Right lobe of liver (tissue), 6 donors: ENCODE measurements at regions of chr2 and their contacts with region 1.

Region 1: GRCh38 chr2:40554668-40555285 is 102.9 kb upstream of the SLC8A1 start:
- DNase-seq: peak in 2 of 3 donors; percentile 43 to 65
- ATAC-seq: peak; percentile 87 to 92 (median 90)
- H3K4me3 ChIP-seq: no peak overlapping the region
- H3K27ac ChIP-seq: no peak overlapping the region
- H3K4me1 ChIP-seq: no peaks in the 10 kb centered on the region
- H3K27me3 ChIP-seq: no peaks in the 10 kb centered on the region
- CTCF ChIP-seq: peak; percentile 71 to 88 (median 82)
- POLR2A ChIP-seq: no peak

Region 2: DNA sequence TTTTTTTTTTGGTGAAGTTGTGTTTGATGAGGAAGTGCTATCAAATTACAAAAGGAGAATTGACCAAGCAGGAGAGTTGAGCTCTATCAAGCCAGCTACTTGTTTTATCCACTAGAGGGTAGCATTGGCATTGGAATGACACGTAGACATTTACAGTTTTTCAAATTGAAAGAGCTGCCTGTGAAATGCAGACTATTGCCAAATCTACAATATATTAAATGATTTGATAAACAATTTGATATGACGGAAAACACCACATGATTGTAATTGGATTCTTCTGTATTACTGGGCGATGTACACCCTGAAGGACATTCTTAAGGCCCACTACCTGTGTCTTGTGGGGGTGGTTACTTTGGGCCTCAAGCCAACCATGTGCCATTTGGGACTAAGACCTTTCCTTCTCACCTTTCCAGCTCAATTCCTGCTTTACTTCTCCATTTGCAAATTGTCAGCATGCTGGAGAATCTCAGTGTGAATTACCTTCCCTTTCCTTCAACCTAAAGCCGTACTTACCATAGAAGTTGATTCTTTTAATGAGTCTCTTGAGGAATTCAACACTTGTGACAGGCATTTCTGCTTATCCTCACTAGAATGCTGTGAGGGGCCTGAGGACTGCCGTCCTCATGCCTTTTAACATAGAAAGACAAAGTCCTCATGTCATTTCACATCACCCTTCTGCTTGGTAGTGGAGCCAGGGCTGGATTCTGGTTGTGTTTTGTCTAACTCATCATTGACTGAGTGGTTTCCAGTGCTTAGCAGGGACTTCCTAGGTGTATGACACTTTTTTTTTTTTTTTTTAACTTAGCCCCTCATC is 640.9 kb before region 1 on chr2:
- intact Hi-C with region 1: loop called (anchors 5 to 10 kb)
- DNase-seq: no peak
- ATAC-seq: peak; percentile 86 to 93 (median 90)
- H3K4me3 ChIP-seq: no peak overlapping the region
- H3K27ac ChIP-seq: no peak overlapping the region
- H3K4me1 ChIP-seq: no peaks in the 10 kb centered on the region
- H3K27me3 ChIP-seq: no peaks in the 10 kb centered on the region
- CTCF ChIP-seq: peak; percentile 73 to 85 (median 78)
- POLR2A ChIP-seq: no peak

Region 3: GRCh38 chr2:39919511-39920306 is 635.1 kb before region 1 on chr2:
- intact Hi-C with region 1: loop called (anchors 5 to 10 kb)
- DNase-seq: no peak
- ATAC-seq: peak in 1 of 4 donors; percentile 33
- H3K4me3 ChIP-seq: no peak overlapping the region
- H3K27ac ChIP-seq: no peak overlapping the region
- H3K4me1 ChIP-seq: no peaks in the 10 kb centered on the region
- H3K27me3 ChIP-seq: no peaks in the 10 kb centered on the region
- CTCF ChIP-seq: no peak
- POLR2A ChIP-seq: no peak

Region 4: DNA sequence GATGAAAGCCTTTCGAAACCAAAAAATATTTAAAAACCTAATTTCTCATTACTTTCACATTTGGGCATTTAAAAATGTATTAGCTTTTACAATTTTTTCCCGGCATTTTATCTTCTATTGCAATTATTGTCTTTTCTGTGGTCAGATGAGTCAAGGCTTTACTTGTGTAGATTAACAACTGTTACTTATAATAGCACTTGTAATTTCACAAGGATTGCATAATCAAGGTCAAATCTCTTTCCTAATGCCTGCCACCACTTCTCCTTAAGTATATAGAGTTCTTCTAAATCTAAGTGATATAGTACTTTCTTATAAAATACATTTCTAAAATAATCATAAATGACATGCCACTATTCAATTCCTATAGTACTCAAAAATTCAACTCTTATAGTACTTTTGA is 170.1 kb before region 1 on chr2:
- intact Hi-C with region 1: no loop called
- DNase-seq: no peak
- ATAC-seq: peak in 2 of 4 donors; percentile 41 to 43
- H3K4me3 ChIP-seq: no peak overlapping the region
- H3K27ac ChIP-seq: no peak overlapping the region
- H3K4me1 ChIP-seq: no peaks in the 10 kb centered on the region
- H3K27me3 ChIP-seq: no peaks in the 10 kb centered on the region
- CTCF ChIP-seq: no peak
- POLR2A ChIP-seq: no peak

Region 5: DNA sequence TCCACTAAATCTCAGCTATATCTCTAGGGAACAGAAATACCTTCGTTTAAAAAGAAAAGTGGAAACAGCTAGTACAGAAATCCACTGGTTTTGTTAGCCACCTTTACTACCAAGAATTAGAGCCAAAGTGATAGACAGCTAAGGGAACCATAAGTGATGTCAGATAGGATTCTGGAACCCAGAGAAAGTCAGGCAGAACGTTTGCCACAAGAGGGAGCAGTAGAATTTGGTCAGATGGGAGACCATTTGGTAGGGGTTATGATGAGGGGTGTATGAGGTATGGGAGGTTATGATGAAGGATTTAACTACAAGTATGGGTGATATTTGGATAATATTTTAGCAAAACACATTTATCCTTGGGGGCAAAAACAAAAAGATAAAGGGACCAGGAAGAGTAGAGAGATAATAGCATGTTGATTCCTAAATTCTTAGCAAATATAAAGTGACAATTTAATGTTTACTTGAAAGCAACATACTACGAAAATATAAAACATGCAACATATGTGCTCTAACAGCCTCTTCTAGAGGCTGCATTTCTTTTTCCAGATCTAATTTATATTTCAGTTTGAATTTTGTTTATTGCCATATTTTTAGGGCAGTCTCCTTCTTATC is 106.2 kb before region 1 on chr2:
- intact Hi-C with region 1: no loop called
- DNase-seq: no peak
- ATAC-seq: peak in 2 of 4 donors; percentile 16 to 34
- H3K4me3 ChIP-seq: no peak overlapping the region
- H3K27ac ChIP-seq: no peak overlapping the region
- H3K4me1 ChIP-seq: no peaks in the 10 kb centered on the region
- H3K27me3 ChIP-seq: no peaks in the 10 kb centered on the region
- CTCF ChIP-seq: peak; percentile 17 to 36 (median 34)
- POLR2A ChIP-seq: no peak